ENCODE measurements at regions of chr19 and their contacts with region 1.

Region 1: GRCh38 chr19:5803752-5804515 is 933 bp upstream of the NRTN start:
- DNase-seq: peak; percentile 86 to 97 (median 90)
- ATAC-seq: peak; percentile 97
- H3K4me3 ChIP-seq: peak overlapping the region; percentile 47
- H3K4me3 Mint-ChIP-seq: peak overlapping the region; percentile 83
- H3K27ac ChIP-seq: no peak overlapping the region
- H3K27ac Mint-ChIP-seq: peak overlapping the region; percentile 68
- H3K4me1 ChIP-seq: peaks cover 36% of the 10 kb centered on the region
- H3K4me1 Mint-ChIP-seq: peaks cover 18% of the 10 kb centered on the region
- H3K27me3 ChIP-seq: peaks cover 26 to 28% of the 10 kb centered on the region in 2 experiments
- H3K27me3 Mint-ChIP-seq: peaks cover 25% of the 10 kb centered on the region
- CTCF ChIP-seq: peak; percentile 81

Region 2: GRCh38 chr19:5790573-5791520 is 13.1 kb before region 1 on chr19 and contains the start of gene DUS3L:
- CTCF ChIA-PET with region 1: interaction called, 37 read pairs
- POLR2A ChIA-PET with region 1: interaction called, 18 read pairs
- intact Hi-C with region 1: loop called in 1 of 2 experiments (anchors 1 kb)
- DNase-seq: peak; percentile 91 to 99 (median 94)
- ATAC-seq: peak; percentile 93
- H3K4me3 ChIP-seq: peak within 1 kb of the TSS; percentile 69
- H3K4me3 Mint-ChIP-seq: peak within 1 kb of the TSS; percentile 96
- H3K27ac ChIP-seq: peak within 1 kb of the TSS; percentile 96 to 97
- H3K27ac Mint-ChIP-seq: peak within 1 kb of the TSS; percentile 97
- H3K4me1 ChIP-seq: peaks cover 26% of the 10 kb centered on the region
- H3K4me1 Mint-ChIP-seq: peaks cover 15% of the 10 kb centered on the region
- H3K27me3 ChIP-seq: no peaks in the 10 kb centered on the region
- H3K27me3 Mint-ChIP-seq: no peaks in the 10 kb centered on the region
- CTCF ChIP-seq: no peak
- total RNA-seq, gene DUS3L: 150 to 170 TPM

Region 3: GRCh38 chr19:5864725-5865486 is 61.0 kb after region 1 on chr19:
- CTCF ChIA-PET with region 1: no interaction called
- POLR2A ChIA-PET with region 1: no interaction called
- intact Hi-C with region 1: no loop called
- DNase-seq: no peak
- ATAC-seq: no peak
- H3K4me3 ChIP-seq: no peak overlapping the region
- H3K4me3 Mint-ChIP-seq: no peak overlapping the region
- H3K27ac ChIP-seq: no peak overlapping the region
- H3K27ac Mint-ChIP-seq: no peak overlapping the region
- H3K4me1 ChIP-seq: no peaks in the 10 kb centered on the region
- H3K4me1 Mint-ChIP-seq: no peaks in the 10 kb centered on the region
- H3K27me3 ChIP-seq: no peaks in the 10 kb centered on the region
- H3K27me3 Mint-ChIP-seq: peaks cover 12% of the 10 kb centered on the region
- CTCF ChIP-seq: no peak

Region 4: DNA sequence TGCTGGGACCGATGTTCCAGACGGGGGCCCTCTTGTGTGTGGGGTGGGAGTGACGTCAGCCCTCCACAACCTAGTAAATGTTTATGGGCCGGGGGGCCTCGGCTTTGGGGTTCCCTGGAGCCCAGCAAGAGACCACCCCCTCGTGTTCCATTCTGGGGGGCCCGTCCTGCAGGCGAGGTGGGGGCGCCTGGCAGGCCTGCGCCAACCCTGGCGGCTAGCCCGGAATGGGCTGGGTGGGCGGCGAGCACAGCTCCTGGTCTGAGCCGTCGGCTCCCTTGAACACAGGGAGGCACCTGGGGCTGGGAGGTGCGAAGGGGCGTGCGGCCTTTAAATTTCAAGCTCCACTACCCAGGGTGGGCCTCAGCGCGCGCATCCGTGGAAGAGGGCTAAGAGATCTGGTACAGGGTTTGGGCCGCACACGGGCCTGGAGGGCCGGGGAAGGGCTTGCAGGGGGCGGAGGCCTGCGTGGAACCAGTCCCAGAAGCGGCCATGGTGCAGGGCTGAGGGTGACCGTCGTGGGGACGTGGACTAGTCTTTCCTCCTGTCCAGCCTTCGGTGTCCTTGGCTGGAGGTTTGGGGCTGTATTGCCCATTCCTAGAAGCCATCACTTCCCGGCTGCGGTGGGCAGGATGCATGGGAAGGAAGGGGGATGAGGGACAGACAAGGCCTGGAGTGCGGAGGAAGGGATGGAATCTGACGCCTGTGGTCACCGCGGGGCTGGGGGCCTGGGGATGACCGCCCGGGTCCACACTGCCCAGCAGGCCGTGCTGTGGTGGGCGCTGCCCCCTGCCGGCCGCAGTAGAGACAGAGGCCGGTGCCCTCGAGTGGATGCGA is 88.2 kb after region 1 on chr19:
- CTCF ChIA-PET with region 1: interaction called, 9 read pairs
- POLR2A ChIA-PET with region 1: interaction called, 5 read pairs
- intact Hi-C with region 1: loop called in 1 of 2 experiments (anchors 2 kb)
- DNase-seq: peak in 6 of 14 experiments; percentile 10 to 46 (median 24)
- ATAC-seq: peak; percentile 41
- H3K4me3 ChIP-seq: no peak overlapping the region
- H3K4me3 Mint-ChIP-seq: peak overlapping the region; percentile 7
- H3K27ac ChIP-seq: no peak overlapping the region
- H3K27ac Mint-ChIP-seq: no peak overlapping the region
- H3K4me1 ChIP-seq: peaks cover 10% of the 10 kb centered on the region
- H3K4me1 Mint-ChIP-seq: no peaks in the 10 kb centered on the region
- H3K27me3 ChIP-seq: no peaks in the 10 kb centered on the region
- H3K27me3 Mint-ChIP-seq: peaks cover 12% of the 10 kb centered on the region
- CTCF ChIP-seq: peak; percentile 41

Region 5: GRCh38 chr19:5967994-5968430 is 164.1 kb after region 1 on chr19:
- CTCF ChIA-PET with region 1: interaction called, 12 read pairs
- POLR2A ChIA-PET with region 1: interaction called, 3 read pairs
- intact Hi-C with region 1: no loop called
- DNase-seq: peak; percentile 42 to 83 (median 50)
- ATAC-seq: peak; percentile 78
- H3K4me3 ChIP-seq: no peak overlapping the region
- H3K4me3 Mint-ChIP-seq: peak overlapping the region; percentile 40
- H3K27ac ChIP-seq: peak overlapping the region in 1 of 2 donors; percentile 22
- H3K27ac Mint-ChIP-seq: peak overlapping the region; percentile 98
- H3K4me1 ChIP-seq: peaks cover 81% of the 10 kb centered on the region
- H3K4me1 Mint-ChIP-seq: peaks cover 93% of the 10 kb centered on the region
- H3K27me3 ChIP-seq: no peaks in the 10 kb centered on the region
- H3K27me3 Mint-ChIP-seq: no peaks in the 10 kb centered on the region
- CTCF ChIP-seq: peak; percentile 93

Region 6: GRCh38 chr19:6021878-6022569 is 218.1 kb after region 1 on chr19:
- CTCF ChIA-PET with region 1: interaction called, 28 read pairs
- POLR2A ChIA-PET with region 1: interaction called, 9 read pairs
- intact Hi-C with region 1: loop called (anchors 1 kb)
- DNase-seq: peak; percentile 65 to 88 (median 76)
- ATAC-seq: peak; percentile 95
- H3K4me3 ChIP-seq: no peak overlapping the region
- H3K4me3 Mint-ChIP-seq: no peak overlapping the region
- H3K27ac ChIP-seq: no peak overlapping the region
- H3K27ac Mint-ChIP-seq: no peak overlapping the region
- H3K4me1 ChIP-seq: peaks cover 8% of the 10 kb centered on the region
- H3K4me1 Mint-ChIP-seq: no peaks in the 10 kb centered on the region
- H3K27me3 ChIP-seq: no peaks in the 10 kb centered on the region
- H3K27me3 Mint-ChIP-seq: peaks cover 6% of the 10 kb centered on the region
- CTCF ChIP-seq: peak; percentile 63

Measured in CD4-positive, alpha-beta T cell (primary cell).